ENCODE measurements at regions of chr15 and their contacts with region 1.

Region 1: DNA sequence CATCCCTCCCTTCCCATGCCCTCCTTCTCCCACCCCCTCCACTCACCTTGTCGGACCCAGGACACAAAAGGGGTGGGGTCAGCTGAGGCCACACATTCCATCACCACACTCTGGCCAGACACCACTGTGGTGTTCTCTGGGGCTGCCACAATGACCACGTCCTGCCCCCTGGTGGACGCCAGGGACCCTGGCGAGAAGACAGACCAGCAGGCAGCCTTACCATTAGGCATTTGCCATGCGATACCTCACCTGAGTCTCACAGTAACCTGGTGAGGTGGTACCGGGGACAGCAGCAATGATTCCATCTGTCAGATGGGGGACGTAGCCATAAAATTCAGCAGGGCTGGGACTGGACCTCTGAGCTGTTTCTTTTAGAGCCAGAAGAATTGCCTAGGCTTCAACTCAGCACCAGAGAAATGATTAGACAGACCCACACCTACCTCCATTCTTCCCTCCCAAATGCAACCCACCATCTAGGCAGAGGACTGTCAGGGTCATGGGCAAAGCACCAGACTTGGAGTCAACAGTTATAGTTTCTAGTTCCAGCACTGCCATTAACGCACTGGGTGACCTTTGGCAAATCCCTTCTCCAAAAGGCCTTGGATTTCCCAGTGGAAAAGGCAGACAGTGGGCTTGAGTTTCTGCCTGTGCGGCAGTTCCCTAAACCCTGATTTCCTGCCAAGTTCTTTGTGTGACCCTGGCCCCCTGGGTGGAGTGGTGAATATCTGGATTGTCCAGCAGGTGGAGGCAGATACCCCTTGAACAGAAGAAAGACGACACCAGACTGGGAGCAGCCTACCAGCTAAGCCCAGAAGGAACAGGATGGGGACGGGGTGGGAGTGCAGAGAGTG is 21.8 kb downstream of the IGDCC4 start:
- DNase-seq: no peak
- ATAC-seq: peak; percentile 96
- H3K4me3 ChIP-seq: no peak overlapping the region
- H3K27ac ChIP-seq: no peak overlapping the region
- H3K4me1 ChIP-seq: no peaks in the 10 kb centered on the region
- H3K27me3 ChIP-seq: peaks cover 0 to 4% of the 10 kb centered on the region in 2 experiments; a peak in 3 of 4 replicates
- CTCF ChIP-seq: peak; percentile 81 to 88 (median 82)
- EP300 ChIP-seq: no peak
- POLR2A ChIP-seq: no peak
- RAD21 ChIP-seq: peak; percentile 86

Region 2: DNA sequence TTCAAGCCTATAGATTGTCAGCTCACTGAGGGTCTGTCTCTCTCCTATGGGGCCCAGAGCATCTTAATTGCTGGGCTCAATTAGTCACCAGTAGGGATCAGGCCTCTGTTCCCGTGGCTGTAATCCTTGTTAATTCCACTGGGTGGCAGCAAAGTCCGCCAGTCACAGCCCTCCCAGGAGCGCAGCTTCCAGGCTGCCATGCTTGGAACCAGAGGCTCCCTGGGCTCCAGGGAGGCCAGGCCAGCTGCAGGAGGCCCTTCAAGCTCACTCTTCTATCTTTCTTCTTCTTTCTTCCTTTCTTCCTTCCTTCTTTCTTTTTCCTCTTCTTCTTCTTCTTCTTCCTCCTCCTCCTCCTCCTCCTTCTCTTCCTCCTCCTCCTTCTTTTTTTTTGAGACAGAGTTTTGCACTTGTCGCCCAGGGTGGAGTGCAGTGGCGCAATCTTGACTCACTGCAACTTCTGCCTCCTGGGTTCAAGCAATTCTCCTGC is 82.1 kb before region 1 on chr15:
- CTCF ChIA-PET with region 1: interaction called, 34 read pairs
- POLR2A ChIA-PET with region 1: no interaction called
- RAD21 ChIA-PET with region 1: interaction called, 14 read pairs
- SMC1A ChIA-PET with region 1: no interaction called
- in situ Hi-C with region 1: no loop called
- intact Hi-C with region 1: loop called (anchors 1 kb)
- DNase-seq: no peak
- ATAC-seq: peak; percentile 99
- H3K4me3 ChIP-seq: no peak overlapping the region
- H3K27ac ChIP-seq: no peak overlapping the region
- H3K4me1 ChIP-seq: no peaks in the 10 kb centered on the region
- H3K27me3 ChIP-seq: peaks cover 0 to 2% of the 10 kb centered on the region in 2 experiments; a peak in 3 of 4 replicates
- CTCF ChIP-seq: peak; percentile 78 to 95 (median 85)
- EP300 ChIP-seq: no peak
- POLR2A ChIP-seq: no peak
- RAD21 ChIP-seq: peak; percentile 87

Region 3: DNA sequence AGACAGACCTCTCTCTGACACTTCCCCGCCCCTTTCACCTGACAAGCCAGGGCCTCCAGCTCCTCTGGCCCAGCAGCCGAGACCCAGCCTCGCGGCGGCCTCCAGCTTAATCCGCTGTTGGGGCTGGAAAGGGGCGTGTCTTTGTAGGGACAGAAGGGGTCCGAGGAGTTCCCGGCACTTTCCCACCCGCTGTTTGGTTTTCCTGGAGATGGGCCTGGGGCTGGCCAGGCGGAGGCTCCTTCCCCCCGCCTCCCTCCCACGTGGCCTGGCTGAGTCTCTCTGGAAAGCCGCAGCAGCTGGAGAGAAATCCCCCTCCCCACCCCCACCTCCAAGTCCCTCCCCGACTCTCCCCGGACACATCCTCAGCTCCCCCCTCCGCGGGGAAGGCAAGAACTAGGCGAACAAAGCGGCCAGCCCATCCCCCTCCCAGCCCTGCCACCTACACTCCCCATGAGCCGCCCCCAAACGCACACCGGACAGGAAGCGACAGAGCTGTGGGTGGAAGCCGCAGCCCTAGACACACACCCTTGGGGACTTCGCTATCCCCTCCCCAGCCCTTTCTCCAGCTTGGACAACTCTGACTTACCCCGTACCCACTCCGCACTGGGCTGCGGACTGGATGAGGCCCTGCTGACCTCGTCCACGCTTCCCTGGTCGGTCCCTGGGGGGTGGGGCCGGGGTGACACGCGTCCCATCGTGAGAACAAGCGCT is 20.5 kb after region 1 on chr15:
- CTCF ChIA-PET with region 1: interaction called, 18 read pairs
- POLR2A ChIA-PET with region 1: interaction called, 6 read pairs
- RAD21 ChIA-PET with region 1: interaction called, 7 read pairs
- SMC1A ChIA-PET with region 1: interaction called, 12 read pairs
- in situ Hi-C with region 1: no loop called
- intact Hi-C with region 1: no loop called
- DNase-seq: no peak
- ATAC-seq: peak; percentile 86
- H3K4me3 ChIP-seq: peak overlapping the region; percentile 58; the same call in 1 of the 2 replicates
- H3K27ac ChIP-seq: peak overlapping the region; percentile 18; the same call in 1 of the 2 replicates
- H3K4me1 ChIP-seq: peaks cover 7% of the 10 kb centered on the region
- H3K27me3 ChIP-seq: peaks cover 2 to 11% of the 10 kb centered on the region in 2 experiments
- CTCF ChIP-seq: no peak
- EP300 ChIP-seq: peak; percentile 19 to 30; a peak in 2 of 4 replicates
- POLR2A ChIP-seq: 0 out of 2 replicates have a peak, but pooled peaks have one; percentile 26
- RAD21 ChIP-seq: no peak

Region 4: DNA sequence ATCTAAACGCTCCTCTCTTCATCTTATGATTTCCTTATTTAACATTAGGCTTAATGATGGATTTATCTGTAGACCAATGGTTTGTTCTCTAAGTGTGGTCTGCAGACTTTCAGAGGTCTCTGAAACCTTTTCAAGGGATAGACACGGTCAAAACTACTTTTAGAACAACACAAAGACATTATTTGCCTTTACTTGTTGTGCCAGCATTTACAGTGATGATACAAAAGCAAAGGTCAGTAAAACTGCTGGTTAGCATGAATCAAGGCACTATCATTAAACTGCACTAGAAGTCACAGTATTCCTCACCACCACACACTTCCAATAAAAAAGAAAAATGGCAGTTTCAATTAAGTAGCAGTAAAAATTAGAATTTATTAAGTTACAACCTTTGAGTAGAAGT is 46.2 kb after region 1 on chr15:
- CTCF ChIA-PET with region 1: interaction called, 16 read pairs
- POLR2A ChIA-PET with region 1: no interaction called
- RAD21 ChIA-PET with region 1: interaction called, 3 read pairs
- SMC1A ChIA-PET with region 1: no interaction called
- in situ Hi-C with region 1: no loop called
- intact Hi-C with region 1: no loop called
- DNase-seq: no peak
- ATAC-seq: no peak
- H3K4me3 ChIP-seq: no peak overlapping the region
- H3K27ac ChIP-seq: no peak overlapping the region
- H3K4me1 ChIP-seq: no peaks in the 10 kb centered on the region
- H3K27me3 ChIP-seq: no peaks in the 10 kb centered on the region
- CTCF ChIP-seq: no peak
- EP300 ChIP-seq: no peak
- POLR2A ChIP-seq: no peak
- RAD21 ChIP-seq: no peak

Region 5: GRCh38 chr15:65466901-65467300 is 65.9 kb after region 1 on chr15:
- CTCF ChIA-PET with region 1: interaction called, 10 read pairs
- POLR2A ChIA-PET with region 1: no interaction called
- RAD21 ChIA-PET with region 1: interaction called, 4 read pairs
- SMC1A ChIA-PET with region 1: interaction called, 4 read pairs
- in situ Hi-C with region 1: no loop called
- intact Hi-C with region 1: loop called (anchors 5 kb)
- DNase-seq: no peak
- ATAC-seq: no peak
- H3K4me3 ChIP-seq: no peak overlapping the region
- H3K27ac ChIP-seq: no peak overlapping the region
- H3K4me1 ChIP-seq: no peaks in the 10 kb centered on the region
- H3K27me3 ChIP-seq: no peaks in the 10 kb centered on the region
- CTCF ChIP-seq: no peak
- EP300 ChIP-seq: no peak
- POLR2A ChIP-seq: no peak
- RAD21 ChIP-seq: no peak

Measured in GM12878 (cell line).